ENCODE measurements at regions of chr2 and their contacts with region 1.

Region 1: DNA sequence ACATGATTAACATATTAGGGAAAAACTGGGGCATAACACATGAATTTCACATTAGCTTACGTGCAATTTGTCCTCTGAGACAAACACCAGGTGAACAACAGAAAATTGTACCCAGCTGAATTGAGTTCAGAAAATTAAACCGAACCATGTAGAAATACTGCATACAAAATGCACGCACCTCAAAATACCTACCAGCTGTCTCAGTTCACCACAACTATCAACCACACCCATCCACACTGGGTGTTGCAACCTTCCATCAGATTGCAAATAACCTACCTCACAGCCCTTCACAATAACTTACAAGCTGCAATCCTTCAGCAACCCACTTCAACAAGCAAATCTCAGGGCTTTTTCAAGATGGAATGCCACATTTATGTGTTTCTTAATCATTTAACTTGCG is 55.9 kb downstream of the UNC50 start:
- DNase-seq: peak in 9 of 10 donors; percentile 28 to 86 (median 71)
- ATAC-seq: peak; percentile 67 to 72
- H3K4me3 Mint-ChIP-seq: peak overlapping the region; percentile 64 to 93 (median 85)
- H3K27ac Mint-ChIP-seq: peak overlapping the region; percentile 91 to 98 (median 96)
- H3K4me1 Mint-ChIP-seq: peaks cover 38 to 82% (median 70%) of the 10 kb centered on the region in 4 donors
- H3K27me3 Mint-ChIP-seq: no peaks in the 10 kb centered on the region

Region 2: DNA sequence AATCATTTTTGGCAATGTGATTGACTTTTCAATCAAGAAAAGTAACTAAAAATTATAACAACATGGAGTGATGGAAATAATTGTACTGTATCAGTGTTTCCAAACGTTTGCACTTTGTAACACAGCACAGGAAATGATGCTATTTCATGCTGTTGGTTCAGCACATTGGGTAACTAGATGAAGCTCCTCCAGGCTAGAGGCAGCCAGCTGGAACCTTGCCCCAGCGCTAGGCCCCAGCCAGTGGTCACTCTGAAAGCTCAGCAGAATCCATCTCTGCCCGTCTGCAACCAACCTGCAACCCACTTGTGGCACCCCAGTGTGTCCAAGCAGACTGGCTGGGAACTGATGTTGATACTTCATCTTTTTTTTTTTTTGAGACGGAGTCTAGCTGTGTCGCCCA is 40.7 kb before region 1 on chr2:
- POLR2A ChIA-PET with region 1: no interaction called
- DNase-seq: no peak
- ATAC-seq: no peak
- H3K4me3 Mint-ChIP-seq: no peak overlapping the region
- H3K27ac Mint-ChIP-seq: peak overlapping the region in 6 of 10 donors; percentile 15 to 80 (median 60)
- H3K4me1 Mint-ChIP-seq: peaks cover 16 to 28% (median 21%) of the 10 kb centered on the region in 4 donors
- H3K27me3 Mint-ChIP-seq: no peaks in the 10 kb centered on the region

Region 3: GRCh38 chr2:98649135-98649991 is 15.0 kb before region 1 on chr2:
- POLR2A ChIA-PET with region 1: interaction called, 11 read pairs
- DNase-seq: peak; percentile 61 to 92 (median 82)
- ATAC-seq: peak; percentile 81 to 91
- H3K4me3 Mint-ChIP-seq: peak overlapping the region in 9 of 10 donors; percentile 25 to 81 (median 49)
- H3K27ac Mint-ChIP-seq: peak overlapping the region; percentile 85 to 99 (median 97)
- H3K4me1 Mint-ChIP-seq: peaks cover 29 to 69% (median 59%) of the 10 kb centered on the region in 4 donors
- H3K27me3 Mint-ChIP-seq: no peaks in the 10 kb centered on the region

Region 4: DNA sequence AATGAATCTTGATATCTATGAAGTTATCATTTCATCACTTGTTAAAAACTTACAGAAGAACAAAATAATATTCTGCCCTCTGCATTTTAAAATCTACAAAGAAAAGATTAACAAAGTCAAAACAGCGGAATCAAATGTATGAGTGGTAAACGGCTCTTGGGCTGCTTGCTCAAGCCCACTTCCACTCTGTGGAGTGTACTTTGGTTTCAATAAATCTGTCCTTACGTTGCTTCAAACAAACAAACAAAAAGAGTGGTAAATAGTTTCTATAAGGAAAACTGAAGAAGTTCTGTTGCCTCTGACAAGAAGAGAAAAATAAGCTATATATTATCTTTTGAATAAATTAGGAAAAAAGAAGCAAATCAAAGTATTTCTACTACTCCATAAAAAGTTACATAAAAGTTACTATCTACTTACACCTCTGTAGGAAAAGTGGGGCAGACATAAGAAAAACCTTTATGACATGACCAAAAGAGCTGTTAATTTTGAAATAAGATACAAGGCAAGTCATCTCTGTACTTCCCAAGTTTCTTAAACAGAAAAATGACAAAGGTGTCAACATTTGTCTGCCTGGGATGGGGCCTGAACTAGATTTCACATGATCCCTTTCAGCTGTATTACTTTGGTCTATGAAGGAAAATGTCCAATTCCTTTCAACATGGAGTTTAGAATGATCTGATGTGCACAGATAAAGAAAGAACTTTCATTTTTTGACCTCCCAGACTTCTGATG is 10.1 kb after region 1 on chr2:
- POLR2A ChIA-PET with region 1: interaction called, 17 read pairs
- DNase-seq: no peak
- ATAC-seq: no peak
- H3K4me3 Mint-ChIP-seq: peak overlapping the region in 2 of 10 donors; percentile 4 to 20
- H3K27ac Mint-ChIP-seq: peak overlapping the region; percentile 57 to 89 (median 81)
- H3K4me1 Mint-ChIP-seq: peaks cover 22 to 52% (median 46%) of the 10 kb centered on the region in 4 donors
- H3K27me3 Mint-ChIP-seq: no peaks in the 10 kb centered on the region